ENCODE measurements at regions of chr11 and their contacts with region 1.

Region 1: GRCh38 chr11:74449369-74449931 is 17.9 kb downstream of the KCNE3 start:
- DNase-seq: peak; percentile 25
- H3K4me3 Mint-ChIP-seq: no peak overlapping the region
- H3K27ac Mint-ChIP-seq: no peak overlapping the region
- H3K4me1 Mint-ChIP-seq: peaks cover 2% of the 10 kb centered on the region
- H3K27me3 Mint-ChIP-seq: peaks cover 11% of the 10 kb centered on the region

Region 2: DNA sequence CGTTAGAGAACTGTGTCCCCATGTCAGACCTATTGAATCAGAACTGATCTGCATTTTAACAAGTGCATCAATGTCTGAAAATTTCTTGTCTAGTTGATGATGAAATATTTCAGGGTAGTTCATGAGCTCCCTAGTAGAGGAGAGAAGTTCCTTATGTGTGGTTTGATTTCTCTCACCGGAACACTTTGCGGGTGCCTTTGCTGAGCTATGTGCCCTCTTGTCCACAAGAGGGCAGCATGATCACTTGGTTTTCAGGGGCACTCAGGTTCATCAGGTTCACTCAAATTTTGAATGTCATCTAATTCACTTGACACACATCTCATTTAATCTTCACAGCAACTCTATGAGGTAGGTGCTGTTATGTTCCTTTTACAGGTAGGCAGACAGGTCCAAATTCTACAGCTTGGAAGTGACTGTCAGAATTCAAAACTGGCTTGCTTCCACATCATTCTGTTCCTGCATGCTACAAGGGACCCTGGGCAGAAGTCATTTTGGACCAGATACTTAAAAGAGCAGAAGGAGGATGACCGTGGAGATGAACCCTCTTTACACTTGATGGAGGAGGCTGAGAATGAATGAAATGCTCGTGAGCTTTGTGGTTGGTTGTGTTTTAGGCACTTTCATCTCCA is 193.6 kb before region 1 on chr11:
- CTCF ChIA-PET with region 1: interaction called, 50 read pairs
- POLR2A ChIA-PET with region 1: interaction called, 4 read pairs
- DNase-seq: peak; percentile 58
- H3K4me3 Mint-ChIP-seq: no peak overlapping the region
- H3K27ac Mint-ChIP-seq: no peak overlapping the region
- H3K4me1 Mint-ChIP-seq: no peaks in the 10 kb centered on the region
- H3K27me3 Mint-ChIP-seq: no peaks in the 10 kb centered on the region

Region 3: GRCh38 chr11:74388678-74389327 is 60.6 kb before region 1 on chr11:
- CTCF ChIA-PET with region 1: interaction called, 116 read pairs
- POLR2A ChIA-PET with region 1: interaction called, 4 read pairs
- DNase-seq: peak; percentile 67
- H3K4me3 Mint-ChIP-seq: no peak overlapping the region
- H3K27ac Mint-ChIP-seq: no peak overlapping the region
- H3K4me1 Mint-ChIP-seq: peaks cover 21% of the 10 kb centered on the region
- H3K27me3 Mint-ChIP-seq: no peaks in the 10 kb centered on the region

Region 4: DNA sequence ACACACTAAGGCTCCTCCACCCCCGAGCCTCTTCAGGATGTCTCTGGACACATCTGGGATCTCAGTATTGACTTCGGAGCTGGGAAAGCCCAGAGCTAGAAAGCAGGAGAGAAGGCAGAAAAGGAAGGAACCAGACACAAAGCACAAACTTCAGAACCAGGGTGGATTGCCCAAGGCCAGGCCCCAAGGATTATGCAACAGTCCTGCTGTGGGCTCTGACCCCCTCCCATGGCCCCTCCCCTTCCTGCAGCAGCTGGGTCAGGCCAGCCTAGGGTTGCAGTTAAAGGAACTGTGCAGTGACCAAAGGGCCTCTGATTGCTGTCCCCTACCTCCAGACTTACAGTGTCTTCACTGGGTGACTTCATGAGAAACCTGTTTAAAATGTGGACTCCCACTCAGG is 12.6 kb after region 1 on chr11:
- CTCF ChIA-PET with region 1: interaction called, 14 read pairs
- POLR2A ChIA-PET with region 1: no interaction called
- DNase-seq: no peak
- H3K4me3 Mint-ChIP-seq: no peak overlapping the region
- H3K27ac Mint-ChIP-seq: no peak overlapping the region
- H3K4me1 Mint-ChIP-seq: no peaks in the 10 kb centered on the region
- H3K27me3 Mint-ChIP-seq: peaks cover 23% of the 10 kb centered on the region

Region 5: GRCh38 chr11:74492974-74493790 is 43.7 kb after region 1 on chr11 and contains the start of gene LIPT2:
- CTCF ChIA-PET with region 1: interaction called, 19 read pairs
- POLR2A ChIA-PET with region 1: interaction called, 7 read pairs
- DNase-seq: peak; percentile 98
- H3K4me3 Mint-ChIP-seq: peak within 1 kb of the TSS; percentile 81
- H3K27ac Mint-ChIP-seq: peak within 1 kb of the TSS; percentile 75
- H3K4me1 Mint-ChIP-seq: peaks cover 19% of the 10 kb centered on the region
- H3K27me3 Mint-ChIP-seq: no peaks in the 10 kb centered on the region
- total RNA-seq, gene LIPT2: 1.4 to 2.6 TPM

Region 6: GRCh38 chr11:74532501-74533246 is 83.2 kb after region 1 on chr11:
- CTCF ChIA-PET with region 1: no interaction called
- POLR2A ChIA-PET with region 1: no interaction called
- DNase-seq: no peak
- H3K4me3 Mint-ChIP-seq: no peak overlapping the region
- H3K27ac Mint-ChIP-seq: no peak overlapping the region
- H3K4me1 Mint-ChIP-seq: peaks cover 4% of the 10 kb centered on the region
- H3K27me3 Mint-ChIP-seq: peaks cover 7% of the 10 kb centered on the region

Region 7: DNA sequence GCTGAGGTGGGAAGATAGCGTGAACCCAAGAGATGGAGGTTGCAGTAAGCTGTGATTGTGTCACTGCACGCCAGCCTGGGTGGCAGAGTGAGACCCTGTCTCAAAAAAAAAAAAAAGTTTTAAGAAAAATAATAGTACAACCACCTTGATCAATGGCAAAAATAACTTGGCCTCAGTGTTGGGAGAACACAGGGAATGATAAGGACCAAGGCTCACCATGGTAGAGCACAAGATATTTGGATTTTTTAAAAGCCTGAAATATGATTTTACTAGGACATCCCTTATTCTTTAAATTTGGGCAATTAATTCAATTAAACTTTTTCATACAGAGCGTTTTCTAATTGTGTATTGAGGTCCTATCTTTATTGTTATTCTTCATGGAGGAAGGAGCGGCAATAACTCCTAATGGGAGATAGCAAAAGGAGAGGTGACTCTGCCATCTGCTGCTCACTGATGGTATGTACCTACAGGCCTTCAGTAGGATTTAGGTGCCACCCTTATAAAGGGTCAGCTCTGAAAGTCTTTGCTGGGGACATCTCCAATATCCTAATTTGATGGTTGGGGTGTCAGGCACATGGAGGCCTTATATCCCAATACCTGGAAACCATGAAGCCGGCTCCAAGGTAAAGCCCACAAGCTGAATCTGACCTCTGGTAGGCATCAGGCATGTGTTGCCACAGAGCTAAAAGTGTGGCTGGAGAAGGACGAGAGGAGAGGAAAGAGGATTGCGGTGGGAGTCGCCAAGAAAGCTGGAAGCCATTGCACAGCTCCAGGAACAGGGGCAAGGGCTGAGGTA is 121.0 kb after region 1 on chr11:
- CTCF ChIA-PET with region 1: interaction called, 47 read pairs
- POLR2A ChIA-PET with region 1: no interaction called
- DNase-seq: peak; percentile 23
- H3K4me3 Mint-ChIP-seq: no peak overlapping the region
- H3K27ac Mint-ChIP-seq: no peak overlapping the region
- H3K4me1 Mint-ChIP-seq: no peaks in the 10 kb centered on the region
- H3K27me3 Mint-ChIP-seq: peaks cover 4% of the 10 kb centered on the region

Region 8: GRCh38 chr11:75204685-75205563 is 755.5 kb after region 1 on chr11:
- CTCF ChIA-PET with region 1: no interaction called
- POLR2A ChIA-PET with region 1: no interaction called
- DNase-seq: peak; percentile 87
- H3K4me3 Mint-ChIP-seq: no peak overlapping the region
- H3K27ac Mint-ChIP-seq: no peak overlapping the region
- H3K4me1 Mint-ChIP-seq: no peaks in the 10 kb centered on the region
- H3K27me3 Mint-ChIP-seq: peaks cover 6% of the 10 kb centered on the region